ENCODE measurements at regions of chr13 and their contacts with region 1.

Region 1: DNA sequence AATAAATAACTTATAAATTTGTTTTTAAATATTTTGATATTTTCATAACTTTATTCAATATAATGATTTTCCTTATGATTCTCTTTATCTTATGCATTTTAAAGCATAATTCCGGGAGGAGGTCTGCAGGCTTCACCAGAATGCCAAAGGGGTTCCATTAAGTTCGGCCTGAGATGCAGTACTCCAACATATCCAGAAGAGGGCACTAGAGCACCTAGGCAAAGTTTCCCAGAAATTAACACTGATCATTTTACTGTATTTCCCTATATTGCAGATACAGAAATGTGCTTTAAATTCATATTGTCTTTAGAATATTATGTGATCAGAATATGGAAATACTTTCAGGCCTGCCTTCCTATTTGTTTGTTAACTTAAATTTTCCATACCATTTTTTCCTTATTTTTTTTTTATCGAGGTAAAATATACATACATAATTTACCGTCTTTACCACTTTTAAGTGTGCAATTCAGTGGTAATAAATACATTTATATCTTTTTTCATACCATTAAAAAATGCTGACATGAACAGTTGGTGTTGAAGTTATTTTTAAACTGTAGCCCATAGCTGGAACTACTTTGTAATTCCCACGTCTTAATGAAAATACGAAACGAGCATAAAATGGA is 58.9 kb upstream of the TM9SF2 start:
- H3K4me3 Mint-ChIP-seq: no peak overlapping the region
- H3K27ac Mint-ChIP-seq: no peak overlapping the region
- H3K4me1 Mint-ChIP-seq: no peaks in the 10 kb centered on the region
- H3K27me3 Mint-ChIP-seq: peaks cover 22% of the 10 kb centered on the region

Region 2: GRCh38 chr13:99614385-99614885 is 172.1 kb after region 1 on chr13:
- intact Hi-C with region 1: loop called (anchors 2 kb)
- H3K4me3 Mint-ChIP-seq: no peak overlapping the region
- H3K27ac Mint-ChIP-seq: no peak overlapping the region
- H3K4me1 Mint-ChIP-seq: peaks cover 9% of the 10 kb centered on the region
- H3K27me3 Mint-ChIP-seq: peaks cover 7% of the 10 kb centered on the region

Region 3: DNA sequence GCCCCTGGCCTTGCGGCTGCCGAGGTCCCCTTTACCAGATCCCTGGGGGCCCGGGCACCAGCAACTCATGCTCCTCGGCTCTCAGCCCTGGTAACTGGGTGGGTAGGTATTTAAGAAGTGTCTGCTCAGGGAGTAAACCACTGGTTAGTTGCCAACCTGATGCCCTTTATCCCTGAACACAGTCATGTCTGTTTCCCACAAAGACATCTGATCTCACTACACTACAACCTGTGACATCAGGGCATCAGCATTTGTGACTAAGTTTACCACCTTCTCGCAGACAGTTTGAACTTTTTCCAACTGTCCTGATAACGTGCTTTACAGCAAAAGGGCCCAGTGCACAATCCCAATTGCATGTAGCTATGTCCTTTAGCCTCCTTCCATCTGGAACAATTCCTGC is 1124.2 kb after region 1 on chr13:
- intact Hi-C with region 1: no loop called
- H3K4me3 Mint-ChIP-seq: no peak overlapping the region
- H3K27ac Mint-ChIP-seq: no peak overlapping the region
- H3K4me1 Mint-ChIP-seq: no peaks in the 10 kb centered on the region
- H3K27me3 Mint-ChIP-seq: no peaks in the 10 kb centered on the region

Measured in dendritic cell treated with granulocyte-macrophage colony-stimulating factor and Interleukin-4, amounts not matched to agents 40 ng/mL and 50 ng/mL, for 4 days (primary cell).